ENCODE measurements at regions of chr20 and their contacts with region 1.

Region 1: DNA sequence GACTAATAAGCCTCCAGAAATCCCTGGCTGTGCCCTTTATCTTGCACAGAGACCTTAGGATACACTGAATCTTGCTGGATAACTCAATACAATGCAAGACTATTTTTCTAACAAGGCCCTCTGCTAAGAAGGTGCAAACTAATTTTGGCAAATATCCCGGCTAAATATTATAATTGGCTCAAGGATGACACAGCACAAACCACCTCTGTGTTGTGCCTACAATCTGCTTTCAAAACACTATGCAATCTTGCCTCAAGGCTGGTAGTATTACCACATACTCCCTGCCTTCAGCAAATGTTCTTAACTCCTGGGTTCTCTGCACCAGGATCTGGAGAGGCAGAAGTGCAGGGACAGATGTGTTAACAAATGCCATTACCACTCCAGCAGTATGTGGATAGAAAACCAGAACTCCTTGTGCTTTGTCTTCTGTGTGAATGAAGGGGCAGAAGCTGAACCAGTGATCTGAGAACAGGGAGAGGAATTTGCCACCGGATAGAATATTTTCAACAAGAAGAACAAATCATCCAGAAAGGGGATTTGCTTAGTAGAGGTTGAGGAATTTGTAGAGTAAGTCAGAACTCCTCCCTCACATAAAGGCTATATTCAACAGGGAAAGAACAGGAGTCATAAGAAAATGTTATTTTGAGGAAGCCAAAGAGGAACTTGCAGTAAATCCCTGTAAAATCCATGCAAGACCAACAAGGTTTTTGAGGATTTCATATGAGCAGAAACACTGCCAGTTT is 74.1 kb upstream of the SLC4A11 start:
- DNase-seq: no peak
- ATAC-seq: peak; percentile 38 to 80 (median 65)
- H3K4me3 ChIP-seq: no peak overlapping the region
- H3K27ac ChIP-seq: peak overlapping the region in 11 of 12 donors; percentile 26 to 80 (median 51)
- H3K4me1 ChIP-seq: peaks cover 0 to 45% (median 37%) of the 10 kb centered on the region in 12 donors
- H3K27me3 ChIP-seq: no peaks in the 10 kb centered on the region
- CTCF ChIP-seq: no peak
- POLR2A ChIP-seq: no peak

Region 2: GRCh38 chr20:3121271-3121911 is 191.7 kb before region 1 on chr20:
- intact Hi-C with region 1: loop called in 1 of 10 experiments (anchors 5 kb)
- DNase-seq: no peak
- ATAC-seq: peak in 1 of 4 donors; percentile 13
- H3K4me3 ChIP-seq: no peak overlapping the region
- H3K27ac ChIP-seq: no peak overlapping the region
- H3K4me1 ChIP-seq: peaks cover 0 to 12% (median 0%) of the 10 kb centered on the region in 12 donors
- H3K27me3 ChIP-seq: no peaks in the 10 kb centered on the region
- CTCF ChIP-seq: no peak
- POLR2A ChIP-seq: no peak

Region 3: GRCh38 chr20:3218307-3218988 is 94.7 kb before region 1 on chr20:
- intact Hi-C with region 1: loop called in 7 of 10 experiments (anchors 1 to 10 kb)
- DNase-seq: peak; percentile 52 to 83 (median 57)
- ATAC-seq: peak; percentile 8 to 87 (median 74)
- H3K4me3 ChIP-seq: peak overlapping the region in 2 of 12 donors; percentile 7
- H3K27ac ChIP-seq: no peak overlapping the region
- H3K4me1 ChIP-seq: peaks cover 0 to 14% (median 3%) of the 10 kb centered on the region in 12 donors
- H3K27me3 ChIP-seq: no peaks in the 10 kb centered on the region
- CTCF ChIP-seq: peak; percentile 88 to 95 (median 94)
- POLR2A ChIP-seq: no peak

Measured in heart left ventricle (tissue), 16 donors.